ENCODE measurements at regions of chr2 and their contacts with region 1.

Region 1: GRCh38 chr2:28117104-28117596 is 226.6 kb downstream of the BABAM2 start:
- DNase-seq: peak; percentile 87 to 94
- H3K4me3 ChIP-seq: peak overlapping the region; percentile 29
- H3K4me3 Mint-ChIP-seq: peak overlapping the region; percentile 76
- H3K27ac Mint-ChIP-seq: peak overlapping the region; percentile 90
- H3K4me1 ChIP-seq: peaks cover 44% of the 10 kb centered on the region
- H3K4me1 Mint-ChIP-seq: peaks cover 40% of the 10 kb centered on the region
- H3K27me3 ChIP-seq: no peaks in the 10 kb centered on the region
- H3K27me3 Mint-ChIP-seq: no peaks in the 10 kb centered on the region
- CTCF ChIP-seq: peak in 1 of 2 experiments; percentile 3

Region 2: DNA sequence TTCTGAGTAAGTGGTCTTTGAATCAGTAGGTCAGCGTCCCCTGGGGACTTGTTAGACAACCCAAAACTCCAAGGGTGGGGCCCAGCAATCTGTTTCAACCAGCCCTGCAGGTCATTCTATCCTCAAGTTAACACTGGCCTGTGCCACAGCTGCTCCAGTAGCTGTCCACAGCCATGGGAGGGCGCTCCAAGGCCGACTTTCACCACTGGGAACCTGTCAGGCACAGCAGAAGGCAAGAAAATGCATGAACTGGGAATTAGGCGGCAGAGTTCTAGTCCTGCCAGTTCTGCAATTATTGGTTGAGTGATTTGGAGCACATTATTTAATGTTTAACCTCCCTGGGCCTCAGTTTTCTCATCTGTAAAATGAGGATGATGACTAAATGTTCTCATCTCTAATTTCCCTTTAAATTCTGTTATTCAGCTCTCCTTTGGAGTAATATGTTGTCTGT is 363.0 kb before region 1 on chr2:
- CTCF ChIA-PET with region 1: interaction called, 5 read pairs
- POLR2A ChIA-PET with region 1: interaction called, 13 read pairs
- intact Hi-C with region 1: loop called (anchors 1 kb)
- DNase-seq: peak; percentile 91 to 92
- H3K4me3 ChIP-seq: peak overlapping the region; percentile 56
- H3K4me3 Mint-ChIP-seq: peak overlapping the region; percentile 89
- H3K27ac Mint-ChIP-seq: peak overlapping the region; percentile 99
- H3K4me1 ChIP-seq: peaks cover 33% of the 10 kb centered on the region
- H3K4me1 Mint-ChIP-seq: peaks cover 21% of the 10 kb centered on the region
- H3K27me3 ChIP-seq: no peaks in the 10 kb centered on the region
- H3K27me3 Mint-ChIP-seq: no peaks in the 10 kb centered on the region
- CTCF ChIP-seq: peak; percentile 77 to 83

Region 3: DNA sequence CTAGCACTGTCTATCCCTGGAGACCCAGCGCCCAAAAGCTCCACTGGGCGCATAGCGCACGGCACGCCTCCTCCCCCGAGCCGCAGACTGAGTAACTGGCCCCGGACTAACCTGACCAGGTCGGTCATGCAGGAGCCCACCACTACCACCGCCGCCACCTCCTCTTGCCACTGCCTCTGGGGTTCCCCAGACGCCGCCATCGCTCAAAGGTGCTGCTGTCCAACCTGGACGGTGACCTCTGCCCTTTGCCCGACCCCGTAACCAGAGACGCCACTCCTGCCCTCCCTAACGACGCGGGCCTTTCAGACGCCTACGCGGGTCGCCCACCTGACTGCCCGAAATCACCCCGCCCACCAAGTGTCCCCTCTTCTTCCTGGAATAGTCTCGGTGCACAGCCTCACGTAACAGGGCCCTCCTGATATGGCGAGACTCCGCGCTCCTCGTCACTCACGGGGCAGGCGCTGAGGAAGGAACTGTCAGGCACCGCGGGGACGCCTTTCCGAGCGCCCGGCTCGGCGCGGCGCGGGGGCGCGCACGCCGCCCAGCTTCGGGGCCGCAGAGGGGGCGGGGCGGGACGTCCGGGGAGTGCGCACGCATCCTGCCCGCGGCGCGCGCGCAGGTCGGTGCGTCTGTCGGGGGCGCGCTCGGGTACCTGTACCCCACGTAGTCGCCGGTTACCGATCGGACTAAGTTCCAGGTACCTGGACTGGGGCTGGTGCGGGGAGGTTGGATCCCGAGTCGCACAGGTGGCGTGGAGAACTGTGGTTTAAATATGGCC is 226.8 kb before region 1 on chr2 and contains the starts of genes BABAM2 and RBKS:
- CTCF ChIA-PET with region 1: no interaction called
- POLR2A ChIA-PET with region 1: interaction called, 6 read pairs
- intact Hi-C with region 1: loop called (anchors 1 kb)
- DNase-seq: peak; percentile 93 to 94
- H3K4me3 ChIP-seq: peak within 1 kb of the TSS; percentile 63
- H3K4me3 Mint-ChIP-seq: peak within 1 kb of the TSS; percentile 100
- H3K27ac Mint-ChIP-seq: peak within 1 kb of the TSS; percentile 99
- H3K4me1 ChIP-seq: no peaks in the 10 kb centered on the region
- H3K4me1 Mint-ChIP-seq: no peaks in the 10 kb centered on the region
- H3K27me3 ChIP-seq: no peaks in the 10 kb centered on the region
- H3K27me3 Mint-ChIP-seq: no peaks in the 10 kb centered on the region
- CTCF ChIP-seq: no peak
- total RNA-seq, gene BABAM2: 50.7 and 57.3 TPM in 2 replicates
- total RNA-seq, gene RBKS: 7.1 and 7.4 TPM in 2 replicates

Region 4: GRCh38 chr2:27980242-27980641 is 136.9 kb before region 1 on chr2:
- CTCF ChIA-PET with region 1: no interaction called
- POLR2A ChIA-PET with region 1: no interaction called
- intact Hi-C with region 1: no loop called
- DNase-seq: no peak
- H3K4me3 ChIP-seq: no peak overlapping the region
- H3K4me3 Mint-ChIP-seq: no peak overlapping the region
- H3K27ac Mint-ChIP-seq: no peak overlapping the region
- H3K4me1 ChIP-seq: no peaks in the 10 kb centered on the region
- H3K4me1 Mint-ChIP-seq: no peaks in the 10 kb centered on the region
- H3K27me3 ChIP-seq: no peaks in the 10 kb centered on the region
- H3K27me3 Mint-ChIP-seq: no peaks in the 10 kb centered on the region
- CTCF ChIP-seq: no peak

Region 5: DNA sequence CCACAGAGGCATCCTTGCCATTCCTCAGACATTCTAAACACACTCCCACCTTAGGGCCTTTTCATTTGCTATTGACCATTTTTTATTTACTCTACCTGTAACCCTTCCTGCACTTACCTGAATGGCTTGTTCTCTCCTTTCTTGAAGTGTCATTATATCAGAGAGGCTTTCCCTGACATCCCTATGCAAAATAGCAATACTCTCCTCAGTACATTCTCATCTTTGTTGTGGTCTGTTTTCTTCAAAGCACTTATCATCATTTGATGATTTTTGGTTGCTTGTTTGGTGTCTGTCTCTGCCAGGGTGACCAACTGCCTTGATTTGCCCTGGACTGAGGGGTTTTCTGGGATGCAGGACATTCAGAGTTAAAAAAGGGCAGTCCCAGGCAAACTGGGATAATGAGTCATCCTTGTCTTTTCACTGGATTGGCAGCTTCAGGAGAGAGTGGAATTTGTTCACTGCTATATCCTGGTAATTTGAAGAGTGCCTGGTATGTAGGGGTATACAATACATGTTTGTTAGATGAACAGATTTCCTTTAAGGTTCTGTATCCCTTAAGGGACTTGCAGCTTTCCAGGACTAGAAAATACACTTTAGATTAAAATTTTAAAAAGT is 124.3 kb before region 1 on chr2:
- CTCF ChIA-PET with region 1: no interaction called
- POLR2A ChIA-PET with region 1: no interaction called
- intact Hi-C with region 1: loop called (anchors 2 kb)
- DNase-seq: peak; percentile 49 to 63
- H3K4me3 ChIP-seq: no peak overlapping the region
- H3K4me3 Mint-ChIP-seq: peak overlapping the region; percentile 53
- H3K27ac Mint-ChIP-seq: peak overlapping the region; percentile 70
- H3K4me1 ChIP-seq: peaks cover 55% of the 10 kb centered on the region
- H3K4me1 Mint-ChIP-seq: peaks cover 19% of the 10 kb centered on the region
- H3K27me3 ChIP-seq: no peaks in the 10 kb centered on the region
- H3K27me3 Mint-ChIP-seq: no peaks in the 10 kb centered on the region
- CTCF ChIP-seq: no peak

Region 6: GRCh38 chr2:28080911-28081310 is 36.2 kb before region 1 on chr2:
- CTCF ChIA-PET with region 1: no interaction called
- POLR2A ChIA-PET with region 1: interaction called, 10 read pairs
- intact Hi-C with region 1: loop called (anchors 1 kb)
- DNase-seq: peak; percentile 57 to 74
- H3K4me3 ChIP-seq: no peak overlapping the region
- H3K4me3 Mint-ChIP-seq: no peak overlapping the region
- H3K27ac Mint-ChIP-seq: peak overlapping the region; percentile 71
- H3K4me1 ChIP-seq: peaks cover 27% of the 10 kb centered on the region
- H3K4me1 Mint-ChIP-seq: peaks cover 44% of the 10 kb centered on the region
- H3K27me3 ChIP-seq: no peaks in the 10 kb centered on the region
- H3K27me3 Mint-ChIP-seq: no peaks in the 10 kb centered on the region
- CTCF ChIP-seq: no peak

Region 7: GRCh38 chr2:28172114-28172898 is 55.2 kb after region 1 on chr2:
- CTCF ChIA-PET with region 1: interaction called, 3 read pairs
- POLR2A ChIA-PET with region 1: no interaction called
- intact Hi-C with region 1: loop called (anchors 5 kb)
- DNase-seq: peak in 1 of 2 experiments; percentile 54
- H3K4me3 ChIP-seq: no peak overlapping the region
- H3K4me3 Mint-ChIP-seq: no peak overlapping the region
- H3K27ac Mint-ChIP-seq: peak overlapping the region; percentile 84
- H3K4me1 ChIP-seq: peaks cover 42% of the 10 kb centered on the region
- H3K4me1 Mint-ChIP-seq: peaks cover 28% of the 10 kb centered on the region
- H3K27me3 ChIP-seq: no peaks in the 10 kb centered on the region
- H3K27me3 Mint-ChIP-seq: no peaks in the 10 kb centered on the region
- CTCF ChIP-seq: no peak

Measured in Caco-2 (cell line).